Activated T-helper 1 cell treated with anti-CD3 and anti-CD28 coated beads, Interleukin-12 subunit alpha, Interleukin-12 subunit beta, Interleukin-2, Interleukin-4 antibody, amounts not matched to agents 30 ng/mL and 10 ng/mL and 1 ng/mL, durations not matched to agents 14 hours and 24 hours and 36 hours (primary cell): ENCODE measurements at regions of chr1 and their contacts with region 1.

Region 1: DNA sequence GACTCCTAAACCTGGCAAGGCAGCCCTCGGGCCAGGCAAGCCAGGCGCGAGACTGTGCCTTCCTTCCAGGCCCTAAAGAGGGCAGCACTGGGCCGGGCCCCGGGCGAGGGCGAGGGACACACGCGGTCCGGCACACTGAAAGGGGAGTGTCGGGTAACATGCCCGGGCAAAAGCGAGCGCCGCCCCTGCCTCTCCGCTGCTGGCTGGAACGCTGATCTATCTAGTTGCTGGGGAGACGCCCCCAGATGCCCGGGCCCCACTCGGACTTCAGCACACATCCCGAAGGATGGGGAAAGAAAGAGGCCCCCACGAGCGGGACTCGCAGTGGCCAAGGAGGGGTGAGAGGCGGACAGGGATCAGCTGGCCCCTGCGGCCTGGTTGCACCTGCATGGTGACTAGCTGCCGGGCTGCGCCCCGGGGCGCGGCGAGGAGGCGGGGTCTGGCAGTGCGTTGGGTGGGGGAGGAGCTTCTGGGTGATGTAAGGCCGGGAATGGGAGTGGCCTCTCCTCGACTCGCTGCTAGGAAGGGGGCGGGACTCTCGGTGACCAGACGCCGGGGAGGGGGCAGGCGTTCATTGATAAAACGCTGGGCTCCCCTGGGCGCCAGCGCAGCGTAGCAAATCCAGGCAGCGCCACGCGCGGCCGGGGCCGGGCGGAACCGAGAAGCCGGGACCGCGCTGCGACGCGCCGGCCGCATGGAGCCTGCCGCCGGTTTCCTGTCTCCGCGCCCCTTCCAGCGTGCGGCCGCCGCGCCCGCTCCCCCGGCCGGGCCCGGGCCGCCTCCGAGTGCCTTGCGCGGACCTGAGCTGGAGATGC is at the start of gene PLK3:
- DNase-seq: peak; percentile 97
- H3K4me3 Mint-ChIP-seq: peak within 1 kb of the TSS; percentile 97
- H3K27ac Mint-ChIP-seq: peak within 1 kb of the TSS; percentile 99
- H3K4me1 Mint-ChIP-seq: peaks cover 35% of the 10 kb centered on the region
- H3K27me3 Mint-ChIP-seq: no peaks in the 10 kb centered on the region
- total RNA-seq, gene PLK3: 208 and 211 TPM in 2 replicates

Region 2: DNA sequence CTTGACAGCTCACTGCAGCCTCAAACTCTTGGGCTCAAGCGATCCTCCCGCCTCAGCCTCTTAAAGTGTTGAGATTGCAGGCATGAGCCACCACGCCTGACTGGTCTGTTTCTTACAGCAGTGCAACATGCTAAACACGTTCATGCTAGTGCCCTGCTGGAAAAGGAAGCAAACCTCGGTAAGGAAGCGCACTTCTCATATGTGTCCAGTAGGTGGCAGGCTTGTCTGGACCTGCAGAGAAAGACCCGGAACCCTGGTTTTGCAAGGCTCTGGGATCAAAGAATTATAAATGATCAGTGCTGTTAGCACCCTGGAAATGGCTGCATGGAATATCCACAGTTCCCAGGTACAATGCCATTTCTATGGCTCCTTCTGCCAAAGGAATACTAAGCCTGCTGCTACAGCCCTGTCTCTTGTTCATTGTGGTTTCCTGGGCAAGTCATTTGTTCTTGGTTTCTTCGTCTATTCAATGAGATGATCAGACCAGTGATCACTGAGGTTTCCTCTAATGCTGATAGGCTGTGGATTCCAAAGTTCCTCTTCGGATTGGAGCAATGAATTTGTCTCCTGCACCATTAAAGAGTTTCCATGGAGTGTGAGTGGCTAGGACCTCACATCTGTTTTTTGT is 84.9 kb before region 1 on chr1:
- intact Hi-C with region 1: no loop called
- DNase-seq: peak; percentile 63
- H3K4me3 Mint-ChIP-seq: peak overlapping the region; percentile 52
- H3K27ac Mint-ChIP-seq: peak overlapping the region; percentile 35
- H3K4me1 Mint-ChIP-seq: peaks cover 44% of the 10 kb centered on the region
- H3K27me3 Mint-ChIP-seq: peaks cover 8% of the 10 kb centered on the region

Region 3: DNA sequence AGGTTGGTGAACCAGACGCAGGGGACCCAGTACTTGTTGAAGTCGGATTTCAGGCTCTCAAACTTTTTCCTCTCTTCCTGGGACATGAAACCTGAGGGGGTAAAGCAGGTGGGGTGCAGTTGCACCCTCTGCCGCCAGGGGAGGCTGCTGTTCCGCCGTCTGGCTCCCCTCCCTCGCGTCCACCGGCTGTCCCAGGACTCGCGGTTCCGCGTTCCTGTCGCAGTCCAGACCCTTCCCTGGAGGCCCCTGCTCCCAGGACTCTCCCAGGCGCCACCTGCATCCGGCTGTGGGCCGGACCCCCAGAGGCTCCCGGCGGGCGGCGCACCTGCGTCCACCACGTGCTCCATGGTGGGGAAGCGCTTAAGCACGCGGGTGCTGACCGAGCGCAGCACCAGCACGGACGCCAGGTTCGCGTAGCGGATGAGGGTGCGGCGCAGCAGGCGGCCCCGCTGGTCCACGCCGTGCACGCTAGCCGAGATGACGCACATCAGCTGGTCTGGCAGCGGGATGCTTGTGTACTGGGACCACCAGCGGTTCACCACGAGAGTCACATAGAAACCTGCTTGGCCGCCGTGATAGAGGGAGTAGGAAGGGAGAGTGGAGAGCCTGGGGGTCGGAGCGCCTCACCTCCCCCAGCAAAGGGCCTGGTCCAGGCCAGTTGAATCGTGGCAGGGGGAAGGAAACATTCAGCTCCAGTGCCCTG is 13.7 kb before region 1 on chr1:
- intact Hi-C with region 1: loop called (anchors 2 kb)
- DNase-seq: peak; percentile 66
- H3K4me3 Mint-ChIP-seq: peak overlapping the region; percentile 80
- H3K27ac Mint-ChIP-seq: peak overlapping the region; percentile 66
- H3K4me1 Mint-ChIP-seq: peaks cover 37% of the 10 kb centered on the region
- H3K27me3 Mint-ChIP-seq: no peaks in the 10 kb centered on the region

Region 4: GRCh38 chr1:44826375-44827196 is 26.6 kb after region 1 on chr1:
- intact Hi-C with region 1: no loop called
- DNase-seq: no peak
- H3K4me3 Mint-ChIP-seq: no peak overlapping the region
- H3K27ac Mint-ChIP-seq: no peak overlapping the region
- H3K4me1 Mint-ChIP-seq: peaks cover 2% of the 10 kb centered on the region
- H3K27me3 Mint-ChIP-seq: no peaks in the 10 kb centered on the region